ENCODE measurements at regions of chr19 and their contacts with region 1.

Region 1: GRCh38 chr19:37779127-37780005 is at the start of gene ZNF573:
- DNase-seq: peak; percentile 86 to 90
- H3K4me3 ChIP-seq: peak within 1 kb of the TSS; percentile 86
- H3K4me3 Mint-ChIP-seq: peak within 1 kb of the TSS; percentile 92
- H3K27ac Mint-ChIP-seq: peak within 1 kb of the TSS; percentile 97
- H3K4me1 ChIP-seq: no peaks in the 10 kb centered on the region
- H3K4me1 Mint-ChIP-seq: peaks cover 7% of the 10 kb centered on the region
- H3K27me3 ChIP-seq: no peaks in the 10 kb centered on the region
- H3K27me3 Mint-ChIP-seq: no peaks in the 10 kb centered on the region
- CTCF ChIP-seq: no peak
- total RNA-seq, gene ZNF573: 6.9 and 9.1 TPM in 2 replicates

Region 2: GRCh38 chr19:37594304-37594981 is 184.9 kb before region 1 on chr19 and contains the starts of genes ZNF540 and ZNF571:
- CTCF ChIA-PET with region 1: no interaction called
- POLR2A ChIA-PET with region 1: no interaction called
- intact Hi-C with region 1: loop called (anchors 1 kb)
- DNase-seq: peak; percentile 93 to 95
- H3K4me3 ChIP-seq: peak within 1 kb of the TSS; percentile 73
- H3K4me3 Mint-ChIP-seq: peak within 1 kb of the TSS; percentile 95
- H3K27ac Mint-ChIP-seq: peak within 1 kb of the TSS; percentile 98
- H3K4me1 ChIP-seq: no peaks in the 10 kb centered on the region
- H3K4me1 Mint-ChIP-seq: peaks cover 15% of the 10 kb centered on the region
- H3K27me3 ChIP-seq: no peaks in the 10 kb centered on the region
- H3K27me3 Mint-ChIP-seq: no peaks in the 10 kb centered on the region
- CTCF ChIP-seq: no peak
- total RNA-seq, gene ZNF540: 0.36 TPM in 1 of 2 replicates, not detected in the other
- total RNA-seq, gene ZNF571: 1.4 and 3.6 TPM in 2 replicates

Region 3: GRCh38 chr19:37719111-37719926 is 60.0 kb before region 1 on chr19 and contains the start of gene ZNF607:
- CTCF ChIA-PET with region 1: interaction called, 5 read pairs
- POLR2A ChIA-PET with region 1: interaction called, 6 read pairs
- intact Hi-C with region 1: loop called (anchors 1 kb)
- DNase-seq: peak; percentile 96 to 97
- H3K4me3 ChIP-seq: peak within 1 kb of the TSS; percentile 60
- H3K4me3 Mint-ChIP-seq: peak within 1 kb of the TSS; percentile 96
- H3K27ac Mint-ChIP-seq: peak within 1 kb of the TSS; percentile 91
- H3K4me1 ChIP-seq: 0 out of 2 replicates have a peak, but pooled peaks cover 3% of the 10 kb centered on the region
- H3K4me1 Mint-ChIP-seq: peaks cover 12% of the 10 kb centered on the region
- H3K27me3 ChIP-seq: no peaks in the 10 kb centered on the region
- H3K27me3 Mint-ChIP-seq: no peaks in the 10 kb centered on the region
- CTCF ChIP-seq: peak; percentile 80 to 84
- total RNA-seq, gene ZNF607: 14.5 and 15.4 TPM in 2 replicates

Measured in Caco-2 (cell line).